ENCODE measurements at regions of chr11 and their contacts with region 1.

Region 1: GRCh38 chr11:115334932-115335788 is 169.1 kb downstream of the CADM1 start:
- DNase-seq: peak; percentile 16
- ATAC-seq: no peak
- H3K4me3 ChIP-seq: no peak overlapping the region
- H3K4me3 Mint-ChIP-seq: no peak overlapping the region
- H3K27ac ChIP-seq: no peak overlapping the region
- H3K27ac Mint-ChIP-seq: no peak overlapping the region
- H3K4me1 ChIP-seq: no peaks in the 10 kb centered on the region
- H3K4me1 Mint-ChIP-seq: no peaks in the 10 kb centered on the region
- H3K27me3 ChIP-seq: no peaks in the 10 kb centered on the region
- H3K27me3 Mint-ChIP-seq: no peaks in the 10 kb centered on the region
- CTCF ChIP-seq: peak; percentile 70

Region 2: DNA sequence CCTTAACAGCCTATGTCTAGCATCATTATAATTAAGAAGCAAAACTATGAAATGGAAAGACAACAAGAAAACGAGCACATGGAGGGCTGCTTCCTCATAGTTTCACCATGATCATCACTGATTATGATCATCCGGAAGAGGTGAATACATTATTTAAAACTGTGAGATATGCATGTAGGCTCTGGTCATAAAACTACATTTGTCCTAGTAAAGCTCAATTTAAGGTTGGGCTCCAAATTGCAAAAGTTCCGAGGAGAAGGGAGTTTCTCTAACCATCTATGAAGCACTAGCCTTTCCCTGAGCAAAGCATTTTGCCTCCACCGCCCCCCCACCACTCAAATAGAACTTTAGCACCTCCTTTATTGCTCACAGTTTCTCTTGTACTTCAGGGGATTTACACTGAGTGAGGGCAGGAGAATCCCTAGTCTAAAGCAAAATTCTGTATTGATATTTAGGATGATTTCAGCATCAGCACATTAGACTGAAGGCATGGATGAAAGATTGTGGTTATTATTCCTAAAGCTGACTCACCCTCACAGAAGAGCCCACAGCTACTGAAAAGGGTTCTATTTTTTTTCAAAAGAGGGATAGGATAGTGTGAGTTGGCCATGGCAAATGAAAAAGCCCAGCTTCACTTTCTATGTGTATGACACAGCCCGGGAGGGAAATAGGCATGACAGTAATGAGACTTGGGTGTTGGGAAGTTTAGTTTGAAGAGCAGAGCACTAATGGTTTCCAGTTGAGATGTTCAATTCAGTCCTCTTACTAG is 34.3 kb before region 1 on chr11:
- CTCF ChIA-PET with region 1: no interaction called
- POLR2A ChIA-PET with region 1: no interaction called
- intact Hi-C with region 1: no loop called
- DNase-seq: no peak
- ATAC-seq: no peak
- H3K4me3 ChIP-seq: no peak overlapping the region
- H3K4me3 Mint-ChIP-seq: no peak overlapping the region
- H3K27ac ChIP-seq: no peak overlapping the region
- H3K27ac Mint-ChIP-seq: no peak overlapping the region
- H3K4me1 ChIP-seq: no peaks in the 10 kb centered on the region
- H3K4me1 Mint-ChIP-seq: no peaks in the 10 kb centered on the region
- H3K27me3 ChIP-seq: no peaks in the 10 kb centered on the region
- H3K27me3 Mint-ChIP-seq: peaks cover 3% of the 10 kb centered on the region
- CTCF ChIP-seq: no peak

Region 3: GRCh38 chr11:115379528-115379927 is 44.4 kb after region 1 on chr11:
- CTCF ChIA-PET with region 1: no interaction called
- POLR2A ChIA-PET with region 1: no interaction called
- intact Hi-C with region 1: no loop called
- DNase-seq: no peak
- ATAC-seq: no peak
- H3K4me3 ChIP-seq: no peak overlapping the region
- H3K4me3 Mint-ChIP-seq: no peak overlapping the region
- H3K27ac ChIP-seq: no peak overlapping the region
- H3K27ac Mint-ChIP-seq: no peak overlapping the region
- H3K4me1 ChIP-seq: no peaks in the 10 kb centered on the region
- H3K4me1 Mint-ChIP-seq: no peaks in the 10 kb centered on the region
- H3K27me3 ChIP-seq: no peaks in the 10 kb centered on the region
- H3K27me3 Mint-ChIP-seq: peaks cover 12% of the 10 kb centered on the region
- CTCF ChIP-seq: no peak

Region 4: DNA sequence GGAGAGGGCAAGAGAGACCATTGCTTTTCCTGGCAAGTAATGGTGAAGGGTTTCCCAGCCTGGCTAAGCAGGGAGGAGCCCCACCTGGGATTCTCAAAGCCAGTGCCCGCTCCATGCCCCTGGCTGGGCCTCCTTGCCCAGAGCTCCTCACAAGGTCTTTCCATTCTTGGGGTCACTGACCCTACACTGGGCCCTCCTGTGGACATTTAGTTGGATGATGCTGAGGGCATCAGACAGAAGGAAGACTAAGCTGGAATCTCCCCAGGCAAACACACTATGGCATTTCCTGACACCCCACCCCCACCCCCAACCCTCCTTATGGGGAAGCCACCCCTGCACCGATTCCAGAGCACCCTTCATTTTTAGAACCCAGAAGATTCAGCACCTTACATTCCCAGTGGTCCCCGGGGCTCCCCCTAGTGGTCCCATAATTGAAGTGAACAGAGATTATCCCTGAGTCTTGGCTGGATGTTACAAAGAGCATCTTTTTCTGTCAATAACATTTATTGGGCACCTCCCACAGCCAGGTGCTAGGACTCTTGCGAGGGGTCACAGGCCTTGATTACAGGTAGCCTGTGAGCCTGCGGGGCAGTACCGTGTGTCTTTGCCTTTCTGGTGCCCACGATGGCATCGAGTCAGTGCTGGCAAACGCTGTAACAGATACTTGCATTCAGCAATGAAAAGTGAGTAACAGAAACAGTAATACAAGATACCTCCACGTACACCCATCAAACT is 889.2 kb after region 1 on chr11:
- CTCF ChIA-PET with region 1: no interaction called
- POLR2A ChIA-PET with region 1: no interaction called
- intact Hi-C with region 1: loop called (anchors 5 kb)
- DNase-seq: peak; percentile 24
- ATAC-seq: no peak
- H3K4me3 ChIP-seq: no peak overlapping the region
- H3K4me3 Mint-ChIP-seq: no peak overlapping the region
- H3K27ac ChIP-seq: no peak overlapping the region
- H3K27ac Mint-ChIP-seq: no peak overlapping the region
- H3K4me1 ChIP-seq: no peaks in the 10 kb centered on the region
- H3K4me1 Mint-ChIP-seq: no peaks in the 10 kb centered on the region
- H3K27me3 ChIP-seq: peaks cover 0 to 4% (median 0%) of the 10 kb centered on the region in 4 experiments
- H3K27me3 Mint-ChIP-seq: peaks cover 20% of the 10 kb centered on the region
- CTCF ChIP-seq: peak; percentile 72

Region 5: GRCh38 chr11:116691771-116692177 is 1356.6 kb after region 1 on chr11:
- CTCF ChIA-PET with region 1: interaction called, 16 read pairs
- POLR2A ChIA-PET with region 1: no interaction called
- intact Hi-C with region 1: no loop called
- DNase-seq: peak; percentile 61
- ATAC-seq: peak; percentile 81
- H3K4me3 ChIP-seq: no peak overlapping the region
- H3K4me3 Mint-ChIP-seq: no peak overlapping the region
- H3K27ac ChIP-seq: no peak overlapping the region
- H3K27ac Mint-ChIP-seq: peak overlapping the region; percentile 4
- H3K4me1 ChIP-seq: no peaks in the 10 kb centered on the region
- H3K4me1 Mint-ChIP-seq: peaks cover 1% of the 10 kb centered on the region
- H3K27me3 ChIP-seq: peaks cover 0 to 6% (median 0%) of the 10 kb centered on the region in 4 experiments
- H3K27me3 Mint-ChIP-seq: peaks cover 8% of the 10 kb centered on the region
- CTCF ChIP-seq: peak; percentile 85

Measured in B cell (primary cell).